ENCODE measurements at regions of chr2 and their contacts with region 1.

Region 1: DNA sequence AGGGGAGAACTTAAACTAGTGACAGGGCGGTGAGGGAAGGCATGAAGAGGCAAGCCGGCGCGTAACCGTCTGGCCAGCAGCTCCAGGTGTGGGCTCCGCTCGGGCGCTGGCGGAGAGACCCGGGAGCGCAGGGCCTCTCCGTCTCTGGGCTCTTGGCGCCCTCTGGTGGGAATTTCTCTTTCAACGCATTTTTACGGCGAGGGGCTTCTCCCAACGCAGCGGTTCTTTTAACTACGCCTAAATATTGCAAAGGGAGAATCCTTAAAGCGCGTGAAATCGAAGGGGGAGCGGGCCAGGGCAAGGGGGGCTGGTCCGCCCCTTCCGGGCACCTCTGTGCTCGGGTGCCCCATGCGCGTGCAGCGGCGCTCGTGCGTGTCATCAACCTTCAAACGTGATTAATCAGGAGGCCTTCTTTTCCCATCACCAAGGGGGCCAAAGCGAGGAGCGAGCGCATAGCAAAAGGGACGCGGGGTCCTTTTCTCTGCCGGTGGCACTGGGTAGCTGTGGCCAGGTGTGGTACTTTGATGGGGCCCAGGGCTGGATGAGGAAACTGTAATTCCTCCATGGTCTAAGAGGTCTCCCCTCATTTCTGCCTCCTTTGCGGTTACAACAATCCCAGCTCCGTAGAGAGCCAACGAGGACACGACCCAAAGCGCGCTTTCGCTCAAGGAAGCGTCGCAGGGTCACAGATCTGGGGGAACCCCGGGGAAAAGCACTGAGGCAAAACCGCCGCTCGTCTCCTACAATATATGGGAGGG is 762 bp upstream of the GAD1 start:
- DNase-seq: peak in 39 of 42 donors; percentile 51 to 87 (median 74)

Region 2: DNA sequence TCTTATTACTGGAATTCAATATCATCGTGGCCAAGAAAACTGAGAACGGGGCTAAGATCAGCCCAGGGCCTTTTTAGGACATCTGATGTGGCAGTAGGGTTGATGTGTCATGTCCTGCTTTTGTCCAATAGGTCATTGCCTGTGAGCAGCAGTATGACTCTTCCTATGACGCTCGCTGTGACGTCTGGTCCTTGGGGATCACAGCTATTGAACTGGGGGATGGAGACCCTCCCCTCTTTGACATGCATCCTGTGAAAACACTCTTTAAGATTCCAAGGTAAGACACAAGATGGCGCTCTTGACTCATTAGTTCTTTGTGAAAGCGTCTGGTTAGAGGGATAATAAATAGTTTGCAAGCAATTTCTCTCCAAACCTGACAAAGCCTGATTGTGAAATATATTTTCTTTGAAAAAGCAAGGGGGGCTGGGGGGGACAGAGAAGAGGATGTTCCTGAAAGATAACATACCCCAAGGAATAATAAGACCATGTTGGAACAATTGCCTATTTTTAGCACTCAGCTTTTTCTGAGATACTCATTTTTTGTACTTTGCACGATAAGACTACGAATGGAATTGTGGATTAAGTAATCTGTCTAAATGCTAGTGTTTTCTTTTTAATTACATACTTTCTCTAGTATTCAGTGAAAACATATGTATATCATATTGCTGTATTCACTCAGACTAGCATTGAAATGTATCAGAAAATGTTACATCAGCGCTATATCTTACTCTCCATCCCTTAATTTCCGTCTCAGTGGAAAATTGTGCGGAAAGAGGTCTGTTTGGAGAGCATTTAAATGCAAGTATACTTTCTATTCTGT is 579.9 kb before region 1 on chr2:
- intact Hi-C with region 1: loop called (anchors 5 kb)
- DNase-seq: peak in 13 of 42 donors; percentile 20 to 74 (median 44)

Region 3: GRCh38 chr2:170369894-170370293 is 446.0 kb before region 1 on chr2:
- intact Hi-C with region 1: loop called (anchors 10 kb)
- DNase-seq: no peak

Region 4: GRCh38 chr2:170409164-170409535 is 406.8 kb before region 1 on chr2:
- intact Hi-C with region 1: loop called (anchors 5 kb)
- DNase-seq: peak; percentile 13 to 91 (median 74)

Region 5: GRCh38 chr2:170486730-170487129 is 329.2 kb before region 1 on chr2:
- intact Hi-C with region 1: loop called (anchors 2 kb)
- DNase-seq: peak in 1 of 42 donors; percentile 48

Region 6: DNA sequence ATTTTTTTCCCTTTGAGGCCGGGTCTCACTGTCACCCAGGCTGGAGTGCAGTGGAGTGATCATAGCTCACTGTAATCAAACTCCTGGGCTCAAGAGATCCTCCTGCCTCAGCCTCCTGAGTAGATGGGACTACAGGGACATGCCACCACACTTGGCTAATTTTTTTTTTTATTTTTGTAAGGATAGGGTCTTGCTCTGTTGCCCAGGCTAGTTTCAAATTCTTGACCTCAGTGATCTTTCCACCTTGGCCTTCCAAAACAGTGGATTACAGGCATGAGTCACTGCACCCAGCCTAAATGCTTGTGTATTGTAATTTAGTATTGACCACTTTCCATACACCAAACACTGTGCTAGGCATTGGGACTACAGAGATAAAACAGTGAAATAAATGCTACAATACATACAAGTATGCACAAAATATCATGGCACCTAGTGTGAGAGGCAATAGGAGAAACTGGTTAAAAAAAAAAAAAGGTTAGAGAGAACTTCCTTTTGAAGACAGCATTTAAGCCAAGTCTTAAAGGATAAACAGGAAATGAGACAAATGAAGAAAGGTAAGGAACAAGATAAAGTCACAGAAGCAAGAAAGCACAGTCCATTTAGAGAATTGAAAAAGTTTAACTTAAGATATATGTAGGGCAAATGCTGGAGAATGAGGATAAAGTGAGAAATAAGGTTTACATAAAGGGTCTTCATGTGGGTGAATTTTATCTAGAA is 226.5 kb after region 1 on chr2:
- intact Hi-C with region 1: no loop called
- DNase-seq: no peak